Activated T-helper 1 cell treated with anti-CD3 and anti-CD28 coated beads, Interleukin-12 subunit alpha, Interleukin-12 subunit beta, Interleukin-2, Interleukin-4 antibody, amounts not matched to agents 30 ng/mL and 10 ng/mL and 1 ng/mL, durations not matched to agents 14 hours and 24 hours and 36 hours (primary cell): ENCODE measurements at regions of chr4 and their contacts with region 1.

Region 1: GRCh38 chr4:48016141-48017103 is at the starts of genes CNGA1 and NIPAL1:
- DNase-seq: peak; percentile 51
- H3K4me3 Mint-ChIP-seq: peak within 1 kb of the TSS; percentile 80
- H3K27ac Mint-ChIP-seq: peak within 1 kb of the TSS; percentile 48
- H3K4me1 Mint-ChIP-seq: peaks cover 12% of the 10 kb centered on the region
- H3K27me3 Mint-ChIP-seq: peaks cover 28% of the 10 kb centered on the region
- total RNA-seq, gene CNGA1: not detected in 2 replicates
- total RNA-seq, gene NIPAL1: 2.0 and 2.5 TPM in 2 replicates

Region 2: DNA sequence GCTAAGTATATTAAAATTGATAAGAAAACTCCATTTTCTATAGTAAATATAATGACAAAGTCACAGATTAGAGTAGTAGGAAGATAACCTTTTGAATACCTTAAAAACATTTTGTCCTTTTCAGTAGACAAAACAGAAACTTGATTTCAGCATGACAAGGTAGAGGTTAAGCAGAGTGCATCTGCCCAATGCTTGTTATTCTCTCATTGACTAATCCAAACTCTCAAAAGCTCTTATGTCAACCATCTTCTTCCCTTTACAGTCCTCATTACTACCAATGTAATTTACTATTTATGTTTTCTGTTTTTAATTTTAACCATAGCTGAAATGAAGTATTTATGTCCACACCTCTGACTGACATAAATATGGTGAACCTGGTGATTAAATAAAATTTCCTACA is 11.2 kb after region 1 on chr4:
- intact Hi-C with region 1: loop called (anchors 1 kb)
- DNase-seq: no peak
- H3K4me3 Mint-ChIP-seq: no peak overlapping the region
- H3K27ac Mint-ChIP-seq: no peak overlapping the region
- H3K4me1 Mint-ChIP-seq: peaks cover 13% of the 10 kb centered on the region
- H3K27me3 Mint-ChIP-seq: peaks cover 7% of the 10 kb centered on the region

Region 3: GRCh38 chr4:48103483-48104139 is 87.2 kb after region 1 on chr4:
- intact Hi-C with region 1: loop called (anchors 5 kb)
- DNase-seq: no peak
- H3K4me3 Mint-ChIP-seq: no peak overlapping the region
- H3K27ac Mint-ChIP-seq: peak overlapping the region; percentile 63
- H3K4me1 Mint-ChIP-seq: peaks cover 24% of the 10 kb centered on the region
- H3K27me3 Mint-ChIP-seq: no peaks in the 10 kb centered on the region

Region 4: GRCh38 chr4:48269861-48270522 is 253.6 kb after region 1 on chr4:
- intact Hi-C with region 1: loop called (anchors 2 kb)
- DNase-seq: peak; percentile 78
- H3K4me3 Mint-ChIP-seq: peak overlapping the region; percentile 89
- H3K27ac Mint-ChIP-seq: peak overlapping the region; percentile 74
- H3K4me1 Mint-ChIP-seq: peaks cover 16% of the 10 kb centered on the region
- H3K27me3 Mint-ChIP-seq: no peaks in the 10 kb centered on the region

Region 5: GRCh38 chr4:48602222-48602621 is 585.8 kb after region 1 on chr4:
- intact Hi-C with region 1: no loop called
- DNase-seq: no peak
- H3K4me3 Mint-ChIP-seq: no peak overlapping the region
- H3K27ac Mint-ChIP-seq: no peak overlapping the region
- H3K4me1 Mint-ChIP-seq: no peaks in the 10 kb centered on the region
- H3K27me3 Mint-ChIP-seq: no peaks in the 10 kb centered on the region